GM12878 (cell line): ENCODE measurements at regions of chr12 and their contacts with region 1.

Region 1: GRCh38 chr12:40312982-40313576 is 88.3 kb downstream of the LRRK2 start:
- DNase-seq: no peak
- ATAC-seq: peak; percentile 51; the same call in 2 of the 3 replicates
- H3K4me3 ChIP-seq: no peak overlapping the region
- H3K27ac ChIP-seq: no peak overlapping the region
- H3K4me1 ChIP-seq: peaks cover 16% of the 10 kb centered on the region
- H3K27me3 ChIP-seq: peaks cover 0 to 2% of the 10 kb centered on the region in 2 experiments; a peak in 1 of 4 replicates
- CTCF ChIP-seq: peak; percentile 13 to 54 (median 26); a peak in 2 of 6 replicates
- EP300 ChIP-seq: no peak
- POLR2A ChIP-seq: no peak
- RAD21 ChIP-seq: peak; percentile 78

Region 2: GRCh38 chr12:40117818-40118217 is 195.3 kb before region 1 on chr12:
- CTCF ChIA-PET with region 1: interaction called, 14 read pairs
- POLR2A ChIA-PET with region 1: no interaction called
- RAD21 ChIA-PET with region 1: interaction called, 16 read pairs
- SMC1A ChIA-PET with region 1: interaction called, 15 read pairs
- in situ Hi-C with region 1: no loop called
- intact Hi-C with region 1: no loop called
- DNase-seq: peak; percentile 51
- ATAC-seq: peak; percentile 94
- H3K4me3 ChIP-seq: no peak overlapping the region
- H3K27ac ChIP-seq: no peak overlapping the region
- H3K4me1 ChIP-seq: peaks cover 3% of the 10 kb centered on the region; the same call in 1 of the 2 replicates
- H3K27me3 ChIP-seq: no peaks in the 10 kb centered on the region; a peak in 1 of 4 replicates
- CTCF ChIP-seq: no peak
- EP300 ChIP-seq: peak; percentile 44 to 59; a peak in 2 of 4 replicates
- POLR2A ChIP-seq: no peak
- RAD21 ChIP-seq: no peak

Region 3: DNA sequence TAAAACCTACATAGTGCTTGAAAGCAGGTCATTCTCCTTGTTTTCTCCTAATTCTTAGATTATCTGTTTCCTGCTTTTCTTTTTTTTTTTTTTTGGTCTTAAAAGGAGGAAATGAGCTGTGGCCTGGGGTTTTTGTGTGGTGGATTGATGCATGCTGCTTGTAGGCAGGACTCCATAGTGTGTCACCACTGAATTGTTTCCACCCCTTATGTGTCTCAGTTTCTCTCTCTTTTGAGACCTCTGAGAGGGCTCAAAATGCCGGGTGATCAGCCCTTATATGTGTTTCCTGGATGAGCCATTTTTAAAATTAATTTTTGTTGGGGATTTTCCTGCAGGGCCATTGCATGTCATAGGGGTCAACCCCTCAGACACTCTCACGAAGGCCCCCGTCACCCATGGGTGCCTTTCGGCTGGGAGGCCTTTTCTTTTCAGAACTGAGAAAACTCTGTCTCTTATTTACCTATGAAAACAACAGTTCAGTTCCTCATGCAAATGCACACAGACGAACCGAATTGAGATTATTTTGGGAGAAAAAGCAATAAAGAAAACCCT is 120.3 kb before region 1 on chr12:
- CTCF ChIA-PET with region 1: interaction called, 4 read pairs
- POLR2A ChIA-PET with region 1: no interaction called
- RAD21 ChIA-PET with region 1: interaction called, 7 read pairs
- SMC1A ChIA-PET with region 1: interaction called, 16 read pairs
- in situ Hi-C with region 1: no loop called
- intact Hi-C with region 1: no loop called
- DNase-seq: peak; percentile 86
- ATAC-seq: peak; percentile 99
- H3K4me3 ChIP-seq: peak overlapping the region; percentile 11; the same call in 1 of the 2 replicates
- H3K27ac ChIP-seq: peak overlapping the region; percentile 79
- H3K4me1 ChIP-seq: peaks cover 7% of the 10 kb centered on the region; the same call in 1 of the 2 replicates
- H3K27me3 ChIP-seq: no peaks in the 10 kb centered on the region
- CTCF ChIP-seq: no peak
- EP300 ChIP-seq: peak; percentile 13 to 61; a peak in 2 of 4 replicates
- POLR2A ChIP-seq: no peak
- RAD21 ChIP-seq: no peak

Region 4: DNA sequence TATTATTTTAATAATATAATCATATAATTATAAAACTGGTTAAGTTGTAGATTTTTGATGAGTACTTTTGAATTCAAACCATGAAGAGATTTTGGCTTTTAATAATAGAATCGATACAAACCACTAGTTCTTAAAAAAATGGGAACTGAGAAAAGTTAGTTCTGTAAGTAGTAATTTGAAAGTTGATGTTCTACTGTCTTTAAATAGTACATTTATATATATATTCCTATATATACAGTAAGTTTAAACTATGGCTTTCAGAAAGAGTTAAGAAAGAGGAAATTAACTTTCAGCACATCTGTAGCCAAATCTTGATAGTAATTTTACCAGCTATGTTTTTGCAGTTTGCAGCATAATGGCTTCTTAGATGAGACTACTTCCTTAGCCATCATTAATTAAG is 80.5 kb before region 1 on chr12:
- CTCF ChIA-PET with region 1: interaction called, 13 read pairs
- POLR2A ChIA-PET with region 1: interaction called, 9 read pairs
- RAD21 ChIA-PET with region 1: interaction called, 20 read pairs
- SMC1A ChIA-PET with region 1: interaction called, 25 read pairs
- in situ Hi-C with region 1: no loop called
- intact Hi-C with region 1: loop called (anchors 2 kb)
- DNase-seq: no peak
- ATAC-seq: peak; percentile 45
- H3K4me3 ChIP-seq: no peak overlapping the region
- H3K27ac ChIP-seq: no peak overlapping the region
- H3K4me1 ChIP-seq: peaks cover 13% of the 10 kb centered on the region; the same call in 1 of the 2 replicates
- H3K27me3 ChIP-seq: no peaks in the 10 kb centered on the region
- CTCF ChIP-seq: no peak
- EP300 ChIP-seq: no peak
- POLR2A ChIP-seq: no peak
- RAD21 ChIP-seq: no peak

Region 5: DNA sequence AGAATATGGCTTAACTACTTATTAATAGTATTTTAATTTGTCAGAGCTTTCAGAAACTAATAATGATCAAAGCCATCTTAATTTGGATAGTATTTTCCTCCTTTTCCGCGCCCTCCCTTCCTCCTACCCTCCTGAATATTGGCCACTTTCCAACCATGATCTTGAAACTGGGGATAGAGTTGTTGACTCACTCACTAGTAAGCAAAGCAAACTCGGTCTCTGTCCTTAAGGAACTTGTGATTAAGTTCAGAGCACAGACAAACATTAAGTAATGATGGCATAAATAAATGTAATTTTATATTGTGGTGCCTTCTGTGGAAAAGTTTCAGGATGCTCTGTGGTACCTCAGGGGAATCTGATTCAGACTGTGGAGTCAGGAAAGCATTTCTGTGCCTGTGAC is 12.6 kb before region 1 on chr12:
- CTCF ChIA-PET with region 1: interaction called, 12 read pairs
- POLR2A ChIA-PET with region 1: no interaction called
- RAD21 ChIA-PET with region 1: interaction called, 3 read pairs
- SMC1A ChIA-PET with region 1: interaction called, 20 read pairs
- in situ Hi-C with region 1: no loop called
- intact Hi-C with region 1: no loop called
- DNase-seq: no peak
- ATAC-seq: no peak
- H3K4me3 ChIP-seq: no peak overlapping the region
- H3K27ac ChIP-seq: no peak overlapping the region
- H3K4me1 ChIP-seq: no peaks in the 10 kb centered on the region
- H3K27me3 ChIP-seq: no peaks in the 10 kb centered on the region
- CTCF ChIP-seq: no peak
- EP300 ChIP-seq: no peak
- POLR2A ChIP-seq: no peak
- RAD21 ChIP-seq: no peak

Region 6: GRCh38 chr12:40375076-40375475 is 62.0 kb after region 1 on chr12:
- CTCF ChIA-PET with region 1: interaction called, 10 read pairs
- POLR2A ChIA-PET with region 1: no interaction called
- RAD21 ChIA-PET with region 1: interaction called, 4 read pairs
- SMC1A ChIA-PET with region 1: no interaction called
- in situ Hi-C with region 1: no loop called
- intact Hi-C with region 1: no loop called
- DNase-seq: no peak
- ATAC-seq: peak; percentile 91
- H3K4me3 ChIP-seq: no peak overlapping the region
- H3K27ac ChIP-seq: no peak overlapping the region
- H3K4me1 ChIP-seq: no peaks in the 10 kb centered on the region
- H3K27me3 ChIP-seq: no peaks in the 10 kb centered on the region
- CTCF ChIP-seq: peak; percentile 30 to 46 (median 45); a peak in 5 of 6 replicates
- EP300 ChIP-seq: no peak
- POLR2A ChIP-seq: no peak
- RAD21 ChIP-seq: no peak

Region 7: DNA sequence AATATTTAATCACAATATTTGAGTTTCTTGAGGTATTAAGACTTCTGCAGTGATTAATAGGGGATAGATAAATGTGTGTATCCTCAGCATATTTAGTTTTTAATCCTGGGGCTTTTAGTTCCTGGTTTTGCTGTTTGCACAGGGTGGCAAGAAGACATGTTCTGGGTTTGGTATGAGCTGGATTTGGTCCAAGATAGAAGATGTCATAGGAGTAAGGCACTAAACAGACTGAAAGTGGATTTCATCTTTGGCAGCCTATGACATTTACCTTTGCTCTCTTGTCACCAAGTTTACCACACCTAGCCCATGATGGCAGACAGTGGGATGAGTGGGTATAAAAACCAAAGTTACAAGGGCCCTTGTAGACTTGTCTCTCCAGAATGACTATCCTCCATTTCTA is 80.0 kb after region 1 on chr12:
- CTCF ChIA-PET with region 1: no interaction called
- POLR2A ChIA-PET with region 1: no interaction called
- RAD21 ChIA-PET with region 1: no interaction called
- SMC1A ChIA-PET with region 1: no interaction called
- in situ Hi-C with region 1: no loop called
- intact Hi-C with region 1: no loop called
- DNase-seq: no peak
- ATAC-seq: no peak
- H3K4me3 ChIP-seq: no peak overlapping the region
- H3K27ac ChIP-seq: no peak overlapping the region
- H3K4me1 ChIP-seq: no peaks in the 10 kb centered on the region
- H3K27me3 ChIP-seq: no peaks in the 10 kb centered on the region; a peak in 1 of 4 replicates
- CTCF ChIP-seq: no peak
- EP300 ChIP-seq: no peak
- POLR2A ChIP-seq: no peak
- RAD21 ChIP-seq: no peak